AG04449 (cell line): ENCODE measurements at regions of chr12 and their contacts with region 1.

Region 1: DNA sequence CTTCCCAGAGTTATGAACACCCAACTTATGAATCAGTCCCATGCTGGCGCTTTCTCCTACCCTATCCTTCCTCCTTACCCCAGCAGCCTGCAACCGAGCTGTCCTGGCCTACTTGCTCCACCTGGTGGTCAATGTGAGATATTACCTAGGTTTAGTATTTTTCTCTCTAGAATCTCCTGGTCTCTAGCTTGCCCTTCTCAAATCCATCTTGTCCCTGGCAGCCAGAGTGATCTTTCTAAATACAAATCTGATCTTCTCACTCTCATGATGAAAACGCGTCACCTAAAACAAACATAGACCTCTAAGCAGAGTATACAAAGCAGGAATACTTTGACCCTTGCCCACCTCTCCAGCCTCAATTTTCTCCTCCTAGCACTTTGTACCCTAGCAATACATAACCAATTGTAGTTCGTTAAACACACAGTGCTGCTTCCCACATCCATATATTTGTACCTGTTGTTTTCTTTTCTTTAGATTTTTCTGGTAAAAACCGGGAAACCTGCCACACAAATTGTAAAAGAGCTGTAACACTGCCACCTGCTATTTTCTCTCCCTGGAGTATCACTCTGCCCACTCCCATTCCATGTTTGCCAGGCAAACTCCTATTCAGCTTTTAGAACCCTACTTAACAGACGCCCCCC is 20.0 kb upstream of the TCP11L2 start:
- DNase-seq: no peak
- H3K4me3 ChIP-seq: no peak overlapping the region
- CTCF ChIP-seq: peak; percentile 63

Region 2: DNA sequence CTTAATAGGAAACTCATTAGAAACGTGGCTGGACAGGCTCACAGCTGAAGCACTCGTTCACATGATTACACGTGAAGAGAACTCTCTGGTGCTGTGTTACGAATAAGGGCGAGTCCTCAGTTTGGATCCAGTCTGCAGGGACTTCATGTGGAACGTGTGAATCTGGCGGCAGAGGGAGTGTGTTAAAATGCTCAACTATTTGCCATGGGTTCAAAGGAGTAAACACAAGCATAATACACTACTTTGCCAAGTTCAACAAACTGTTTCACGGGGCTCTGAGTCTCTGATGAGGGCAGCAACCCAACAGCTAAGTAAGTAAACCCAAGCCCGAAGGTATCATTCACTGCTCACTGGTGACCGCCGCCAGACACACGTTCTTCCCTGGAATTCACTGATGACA is 186.2 kb before region 1 on chr12:
- CTCF ChIA-PET with region 1: no interaction called
- POLR2A ChIA-PET with region 1: no interaction called
- DNase-seq: no peak
- H3K4me3 ChIP-seq: no peak overlapping the region
- CTCF ChIP-seq: no peak

Region 3: DNA sequence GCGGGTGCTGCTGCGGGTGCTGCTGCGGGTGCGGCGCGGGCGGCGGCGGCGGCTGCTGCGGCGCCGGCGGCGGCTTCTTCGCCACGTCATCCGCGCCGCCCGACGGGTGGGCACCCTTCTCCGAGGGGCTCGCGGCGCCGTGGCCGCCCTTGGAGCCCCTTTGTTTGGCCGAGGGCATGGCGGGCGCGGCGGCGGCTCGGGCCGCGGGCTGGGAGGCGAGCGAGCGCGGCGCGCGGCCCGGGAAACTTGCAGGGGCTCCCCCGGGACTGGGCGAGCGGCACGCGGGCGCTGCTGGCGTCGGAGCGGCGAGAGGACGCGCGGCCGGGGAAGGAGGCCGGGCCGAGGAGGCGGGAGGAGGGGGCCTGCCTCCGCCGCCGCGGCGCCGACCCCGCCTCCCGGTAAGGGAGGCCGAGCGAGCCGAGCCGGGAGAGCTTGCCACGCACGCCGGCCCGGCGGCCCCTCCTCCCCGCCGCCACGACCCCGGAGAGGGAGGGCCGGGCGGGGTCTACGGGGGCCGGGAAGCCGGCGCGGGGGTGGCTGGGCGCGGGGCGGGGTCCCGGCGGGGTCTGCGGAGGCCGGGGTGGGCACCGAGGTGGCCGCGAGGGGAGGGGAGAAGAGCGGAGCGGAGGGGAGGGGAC is 34.8 kb before region 1 on chr12 and contains the start of gene CKAP4:
- CTCF ChIA-PET with region 1: interaction called, 24 read pairs
- POLR2A ChIA-PET with region 1: no interaction called
- DNase-seq: no peak
- H3K4me3 ChIP-seq: peak within 1 kb of the TSS; percentile 86
- CTCF ChIP-seq: no peak

Region 4: GRCh38 chr12:106271575-106272505 is 10.7 kb before region 1 on chr12:
- CTCF ChIA-PET with region 1: interaction called, 15 read pairs
- POLR2A ChIA-PET with region 1: no interaction called
- DNase-seq: no peak
- H3K4me3 ChIP-seq: no peak overlapping the region
- CTCF ChIP-seq: no peak

Region 5: DNA sequence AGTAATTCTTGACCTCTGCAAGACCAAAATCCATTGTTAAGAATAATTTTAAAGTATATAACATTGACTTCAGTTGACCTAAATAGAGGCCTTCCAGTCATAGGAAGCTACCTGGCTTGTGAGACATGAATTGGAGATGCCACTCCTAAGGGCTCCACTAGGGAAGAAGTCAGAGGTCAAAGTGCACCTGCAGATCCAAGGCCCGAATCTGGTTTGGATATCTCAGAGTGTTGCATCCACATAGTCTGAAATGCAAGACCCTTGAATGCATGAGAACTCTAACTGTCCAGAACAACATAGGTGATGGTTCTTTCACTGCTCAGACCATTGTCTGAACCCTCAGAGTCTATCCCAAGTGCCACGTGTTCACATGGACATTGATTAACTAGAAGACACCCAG is 322.7 kb after region 1 on chr12:
- CTCF ChIA-PET with region 1: no interaction called
- POLR2A ChIA-PET with region 1: no interaction called
- DNase-seq: no peak
- H3K4me3 ChIP-seq: no peak overlapping the region
- CTCF ChIP-seq: no peak